ENCODE measurements at regions of chr1 and their contacts with region 1.

Region 1: GRCh38 chr1:151059078-151059907 is at the start of gene CDC42SE1:
- DNase-seq: peak; percentile 92
- ATAC-seq: peak; percentile 75
- H3K4me3 Mint-ChIP-seq: peak within 1 kb of the TSS; percentile 93
- H3K27ac Mint-ChIP-seq: peak within 1 kb of the TSS; percentile 98
- H3K4me1 Mint-ChIP-seq: peaks cover 54% of the 10 kb centered on the region
- H3K27me3 Mint-ChIP-seq: no peaks in the 10 kb centered on the region
- total RNA-seq, gene CDC42SE1: 95.4 to 101 TPM

Region 2: DNA sequence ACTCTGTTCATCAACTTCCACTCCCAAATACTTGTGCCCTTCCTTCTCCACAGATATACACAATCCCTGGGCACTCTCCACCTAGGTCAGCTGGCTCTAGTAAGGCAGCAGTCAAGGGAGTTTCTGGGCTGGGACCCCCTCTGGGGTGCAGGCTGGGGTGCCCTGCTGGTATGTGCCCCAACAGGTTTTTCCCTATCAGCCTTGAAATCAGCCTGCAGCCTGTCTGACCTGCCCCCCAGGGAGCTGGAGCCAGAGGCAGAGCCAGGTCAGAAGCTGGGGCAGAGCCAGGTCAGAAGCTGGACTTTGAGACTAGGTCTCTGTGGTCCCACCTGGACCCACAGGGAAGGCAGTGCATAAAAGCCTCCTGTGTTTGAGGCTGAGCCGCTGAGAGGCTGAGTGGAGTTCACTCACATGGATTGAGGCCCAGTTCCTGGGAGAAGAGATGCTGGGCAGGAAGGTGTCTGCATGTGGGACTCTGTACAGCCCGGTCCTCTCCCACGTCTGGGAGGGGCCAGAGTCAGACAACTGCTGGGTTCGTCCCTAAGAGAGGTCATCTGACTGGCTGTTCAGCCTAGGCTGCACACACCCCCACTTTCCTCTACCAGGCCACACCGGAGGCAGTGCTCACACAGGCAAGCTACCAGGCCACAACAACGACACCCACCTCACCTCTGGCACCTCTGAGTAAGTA is 77.5 kb before region 1 on chr1 and contains the start of gene ANXA9:
- CTCF ChIA-PET with region 1: no interaction called
- POLR2A ChIA-PET with region 1: no interaction called
- intact Hi-C with region 1: no loop called
- DNase-seq: no peak
- ATAC-seq: no peak
- H3K4me3 Mint-ChIP-seq: no peak within 1 kb of the TSS
- H3K27ac Mint-ChIP-seq: no peak within 1 kb of the TSS
- H3K4me1 Mint-ChIP-seq: peaks cover 24% of the 10 kb centered on the region
- H3K27me3 Mint-ChIP-seq: no peaks in the 10 kb centered on the region
- total RNA-seq, gene ANXA9: 0.27 to 0.28 TPM

Region 3: GRCh38 chr1:151024540-151025146 is 34.6 kb before region 1 on chr1:
- CTCF ChIA-PET with region 1: interaction called, 8 read pairs
- POLR2A ChIA-PET with region 1: no interaction called
- intact Hi-C with region 1: loop called (anchors 1 to 2 kb)
- DNase-seq: peak; percentile 91
- ATAC-seq: peak; percentile 100
- H3K4me3 Mint-ChIP-seq: peak overlapping the region; percentile 30
- H3K27ac Mint-ChIP-seq: peak overlapping the region; percentile 65
- H3K4me1 Mint-ChIP-seq: peaks cover 5% of the 10 kb centered on the region
- H3K27me3 Mint-ChIP-seq: no peaks in the 10 kb centered on the region

Measured in activated CD4-positive, alpha-beta T cell treated with anti-CD3 and anti-CD28 coated beads for 36 hours (primary cell).